ENCODE measurements at regions of chr22 and their contacts with region 1.

Region 1: DNA sequence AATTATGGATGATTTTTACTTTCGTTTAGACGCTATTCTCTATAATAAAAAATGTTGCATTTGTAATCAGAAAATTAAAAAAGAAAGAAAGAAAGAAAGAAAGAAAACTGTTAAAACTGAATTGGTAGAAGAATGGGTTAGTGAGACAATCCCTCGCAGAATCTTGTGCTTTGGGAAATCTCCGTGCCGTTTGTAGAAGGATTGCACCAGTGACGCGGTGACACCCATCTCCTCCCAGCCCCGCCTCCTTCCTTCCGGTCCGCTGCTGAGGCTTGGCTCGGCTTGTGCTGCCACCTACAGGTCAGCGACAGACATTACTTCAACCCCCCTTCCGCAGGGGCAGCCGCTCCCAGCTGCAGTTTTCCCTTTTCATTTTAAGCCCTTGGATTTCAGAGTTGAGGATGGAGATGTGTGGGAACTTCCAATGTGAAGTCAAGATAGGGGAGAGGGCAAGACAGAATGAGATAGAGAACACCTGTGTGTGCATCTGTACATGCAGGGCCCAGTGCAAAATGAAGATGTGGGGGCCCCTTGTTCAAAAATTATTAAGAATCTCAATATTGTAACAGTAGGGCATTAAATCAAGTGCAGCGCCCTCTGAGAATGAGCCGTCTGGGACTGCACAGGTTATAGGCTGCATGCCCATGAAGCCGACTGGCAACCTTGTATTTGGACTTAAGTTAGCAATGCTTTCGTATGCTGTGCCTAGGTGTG is 41.1 kb downstream of the TST start:
- DNase-seq: peak; percentile 83 to 95 (median 88)
- ATAC-seq: peak; percentile 88
- H3K4me3 ChIP-seq: peak overlapping the region; percentile 77
- H3K4me3 Mint-ChIP-seq: peak overlapping the region; percentile 97
- H3K27ac ChIP-seq: peak overlapping the region; percentile 16 to 62
- H3K27ac Mint-ChIP-seq: peak overlapping the region; percentile 92
- H3K4me1 ChIP-seq: peaks cover 15% of the 10 kb centered on the region
- H3K4me1 Mint-ChIP-seq: peaks cover 8% of the 10 kb centered on the region
- H3K27me3 ChIP-seq: peaks cover 0 to 5% of the 10 kb centered on the region in 2 experiments
- H3K27me3 Mint-ChIP-seq: peaks cover 5% of the 10 kb centered on the region
- CTCF ChIP-seq: peak; percentile 88

Region 2: DNA sequence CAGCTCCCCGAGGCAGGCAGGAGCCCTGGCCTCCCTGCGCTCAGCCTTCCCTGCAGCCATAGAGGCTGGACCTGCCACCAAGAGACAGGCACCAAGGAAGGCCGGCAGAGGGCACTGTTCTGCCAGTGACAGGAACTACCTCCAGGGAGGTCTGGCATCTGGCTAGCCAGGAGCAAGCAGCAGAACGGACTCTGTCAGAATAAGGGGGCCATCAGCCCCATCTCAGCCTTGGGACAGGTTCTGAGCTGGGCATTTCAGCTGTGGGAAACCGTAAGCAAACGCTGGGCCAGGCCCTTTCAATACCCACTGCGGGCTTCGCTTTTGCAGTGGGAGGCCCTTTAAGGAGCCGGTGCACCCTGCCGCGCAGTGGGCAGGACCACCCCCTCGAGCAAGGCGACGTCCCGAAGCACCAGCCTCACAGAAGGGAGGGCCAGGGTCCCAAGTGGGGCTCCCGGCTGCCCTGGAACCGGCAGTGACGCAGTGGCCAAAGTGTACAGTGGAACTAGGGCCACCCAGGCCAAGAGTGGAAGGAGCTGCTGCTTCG is 220.4 kb before region 1 on chr22:
- CTCF ChIA-PET with region 1: no interaction called
- POLR2A ChIA-PET with region 1: no interaction called
- intact Hi-C with region 1: loop called (anchors 1 kb)
- DNase-seq: peak; percentile 58 to 83 (median 72)
- ATAC-seq: peak; percentile 79
- H3K4me3 ChIP-seq: no peak overlapping the region
- H3K4me3 Mint-ChIP-seq: no peak overlapping the region
- H3K27ac ChIP-seq: no peak overlapping the region
- H3K27ac Mint-ChIP-seq: no peak overlapping the region
- H3K4me1 ChIP-seq: peaks cover 4% of the 10 kb centered on the region
- H3K4me1 Mint-ChIP-seq: peaks cover 4% of the 10 kb centered on the region
- H3K27me3 ChIP-seq: peaks cover under 1 to 10% of the 10 kb centered on the region in 2 experiments
- H3K27me3 Mint-ChIP-seq: peaks cover 13% of the 10 kb centered on the region
- CTCF ChIP-seq: peak; percentile 75

Region 3: DNA sequence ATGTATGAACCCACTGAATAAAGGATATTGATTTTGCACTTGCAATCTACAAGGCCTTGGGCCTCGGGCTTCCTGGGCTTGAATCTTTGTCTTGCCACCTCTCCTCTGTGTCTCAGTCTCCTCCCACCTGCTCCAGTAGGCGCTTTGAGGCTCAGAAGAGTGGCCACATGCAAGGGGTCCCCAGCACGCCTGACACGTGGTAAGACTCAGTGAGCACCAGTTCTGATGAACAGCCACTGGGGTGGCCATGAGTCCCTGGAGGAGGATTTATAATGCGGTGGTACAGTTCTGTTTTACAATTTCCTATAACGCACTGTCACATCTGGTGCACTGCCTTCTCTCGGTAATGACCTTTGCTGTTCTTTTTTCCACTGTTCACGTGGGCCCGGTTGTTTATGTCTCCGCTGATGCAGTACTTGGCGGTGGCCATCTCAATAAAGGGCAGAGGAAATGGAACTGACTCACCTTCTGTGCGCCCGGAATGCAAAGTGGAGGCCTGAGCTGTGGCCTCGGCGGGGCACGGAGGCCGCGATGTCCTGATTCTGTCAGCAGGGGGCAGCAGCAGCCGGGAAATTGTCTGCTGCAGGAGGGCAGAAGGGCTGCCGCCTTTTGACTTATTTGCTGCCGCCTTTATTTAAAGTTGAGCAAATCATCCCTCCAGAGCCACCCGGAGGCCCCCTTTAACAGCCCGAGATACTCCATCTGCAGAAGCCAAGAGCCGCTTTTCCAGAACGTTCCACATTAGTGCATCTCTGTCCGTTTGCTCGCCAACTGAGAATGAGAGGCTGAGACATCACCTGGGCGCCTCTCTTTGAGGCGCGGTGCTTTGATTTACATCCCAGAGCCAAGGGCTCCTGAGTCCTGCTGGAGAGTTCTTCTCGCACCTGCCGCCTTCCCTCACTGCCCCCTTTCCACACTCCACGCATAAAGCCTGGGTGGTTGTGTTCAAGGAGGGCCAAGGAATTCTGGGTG is 196.2 kb before region 1 on chr22:
- CTCF ChIA-PET with region 1: interaction called, 12 read pairs
- POLR2A ChIA-PET with region 1: interaction called, 21 read pairs
- intact Hi-C with region 1: loop called (anchors 1 kb)
- DNase-seq: peak; percentile 73 to 95 (median 87)
- ATAC-seq: peak; percentile 96
- H3K4me3 ChIP-seq: no peak overlapping the region
- H3K4me3 Mint-ChIP-seq: no peak overlapping the region
- H3K27ac ChIP-seq: no peak overlapping the region
- H3K27ac Mint-ChIP-seq: peak overlapping the region; percentile 33
- H3K4me1 ChIP-seq: peaks cover 16% of the 10 kb centered on the region
- H3K4me1 Mint-ChIP-seq: peaks cover 20% of the 10 kb centered on the region
- H3K27me3 ChIP-seq: no peaks in the 10 kb centered on the region
- H3K27me3 Mint-ChIP-seq: no peaks in the 10 kb centered on the region
- CTCF ChIP-seq: peak; percentile 97

Region 4: GRCh38 chr22:37588546-37589215 is 610.6 kb after region 1 on chr22:
- CTCF ChIA-PET with region 1: no interaction called
- POLR2A ChIA-PET with region 1: no interaction called
- intact Hi-C with region 1: no loop called
- DNase-seq: no peak
- ATAC-seq: no peak
- H3K4me3 ChIP-seq: no peak overlapping the region
- H3K4me3 Mint-ChIP-seq: no peak overlapping the region
- H3K27ac ChIP-seq: no peak overlapping the region
- H3K27ac Mint-ChIP-seq: no peak overlapping the region
- H3K4me1 ChIP-seq: peaks cover 17% of the 10 kb centered on the region
- H3K4me1 Mint-ChIP-seq: peaks cover 18% of the 10 kb centered on the region
- H3K27me3 ChIP-seq: no peaks in the 10 kb centered on the region
- H3K27me3 Mint-ChIP-seq: no peaks in the 10 kb centered on the region
- CTCF ChIP-seq: no peak